Calu3 (cell line): ENCODE measurements at regions of chr11 and their contacts with region 1.

Region 1: GRCh38 chr11:74409633-74410032 is 11.4 kb upstream of the PGM2L1 start:
- DNase-seq: no peak
- H3K4me3 Mint-ChIP-seq: no peak overlapping the region
- H3K27ac Mint-ChIP-seq: no peak overlapping the region
- H3K4me1 Mint-ChIP-seq: peaks cover 10% of the 10 kb centered on the region
- H3K27me3 Mint-ChIP-seq: no peaks in the 10 kb centered on the region
- CTCF ChIP-seq: no peak

Region 2: DNA sequence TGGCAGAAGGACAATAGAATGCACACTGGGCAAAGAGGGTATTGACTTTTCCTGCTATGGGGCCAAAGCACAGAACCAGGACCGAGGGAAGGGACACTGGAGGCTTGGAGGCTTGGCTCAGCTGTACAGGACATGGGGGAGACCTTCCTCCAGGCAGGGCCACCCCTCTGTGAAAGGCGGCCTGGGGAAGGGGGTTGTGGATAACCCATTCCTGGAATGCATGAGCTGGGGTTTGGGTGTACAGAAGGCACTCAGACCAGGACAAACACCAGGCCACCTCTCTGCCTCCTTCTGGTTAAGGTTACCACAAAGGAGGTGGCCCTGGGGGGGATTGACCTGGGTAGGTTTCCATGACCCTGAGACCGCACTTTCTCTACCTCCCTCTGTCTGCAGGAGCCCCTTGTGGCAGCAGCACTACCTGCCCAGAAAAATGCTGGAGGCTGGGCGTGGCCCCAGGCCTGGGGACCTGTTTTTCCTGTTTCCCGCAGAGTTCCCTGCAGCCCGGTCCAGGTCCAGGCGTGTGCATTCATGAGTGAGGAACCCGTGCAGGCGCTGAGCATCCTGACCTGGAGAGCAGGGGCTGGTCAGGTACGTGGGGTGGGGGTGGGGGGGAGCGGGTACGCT is 1181.9 kb before region 1 on chr11:
- CTCF ChIA-PET with region 1: no interaction called
- intact Hi-C with region 1: no loop called
- DNase-seq: peak; percentile 91
- H3K4me3 Mint-ChIP-seq: no peak overlapping the region
- H3K27ac Mint-ChIP-seq: no peak overlapping the region
- H3K4me1 Mint-ChIP-seq: peaks cover 8% of the 10 kb centered on the region
- H3K27me3 Mint-ChIP-seq: no peaks in the 10 kb centered on the region
- CTCF ChIP-seq: peak; percentile 57

Region 3: DNA sequence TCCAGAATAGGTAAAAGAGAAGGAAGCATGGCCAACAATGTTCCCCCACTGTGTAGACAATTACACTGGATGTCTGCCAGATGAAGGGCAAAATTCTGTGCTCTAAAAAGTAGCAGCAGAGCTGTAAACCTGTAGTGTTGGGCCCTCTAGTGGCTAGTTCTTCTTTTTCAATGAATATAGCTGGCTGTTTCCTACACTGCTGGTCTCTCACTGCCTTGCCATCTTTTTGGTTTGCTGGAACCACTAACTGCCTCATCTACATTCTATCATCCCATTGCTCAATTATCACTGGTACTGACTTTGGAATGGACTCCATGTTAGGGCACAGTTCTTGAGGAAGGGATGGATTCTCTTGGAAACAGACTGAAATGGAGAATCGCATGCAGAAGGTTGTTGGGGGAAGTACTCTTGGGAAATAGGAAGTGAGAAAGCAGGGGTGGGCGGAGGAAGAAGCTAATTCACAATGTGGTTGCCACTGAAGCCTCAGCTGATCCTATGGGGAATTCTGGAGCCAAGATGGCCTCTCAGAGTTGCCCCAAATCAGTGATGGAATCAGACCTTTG is 39.8 kb after region 1 on chr11:
- CTCF ChIA-PET with region 1: interaction called, 10 read pairs
- intact Hi-C with region 1: no loop called
- DNase-seq: peak; percentile 60
- H3K4me3 Mint-ChIP-seq: no peak overlapping the region
- H3K27ac Mint-ChIP-seq: no peak overlapping the region
- H3K4me1 Mint-ChIP-seq: peaks cover 9% of the 10 kb centered on the region
- H3K27me3 Mint-ChIP-seq: no peaks in the 10 kb centered on the region
- CTCF ChIP-seq: peak; percentile 62

Region 4: GRCh38 chr11:74720596-74721478 is 311.2 kb after region 1 on chr11:
- CTCF ChIA-PET with region 1: no interaction called
- intact Hi-C with region 1: no loop called
- DNase-seq: no peak
- H3K4me3 Mint-ChIP-seq: no peak overlapping the region
- H3K27ac Mint-ChIP-seq: no peak overlapping the region
- H3K4me1 Mint-ChIP-seq: no peaks in the 10 kb centered on the region
- H3K27me3 Mint-ChIP-seq: peaks cover 79% of the 10 kb centered on the region
- CTCF ChIP-seq: no peak